ENCODE measurements at regions of chr5 and their contacts with region 1.

Region 1: DNA sequence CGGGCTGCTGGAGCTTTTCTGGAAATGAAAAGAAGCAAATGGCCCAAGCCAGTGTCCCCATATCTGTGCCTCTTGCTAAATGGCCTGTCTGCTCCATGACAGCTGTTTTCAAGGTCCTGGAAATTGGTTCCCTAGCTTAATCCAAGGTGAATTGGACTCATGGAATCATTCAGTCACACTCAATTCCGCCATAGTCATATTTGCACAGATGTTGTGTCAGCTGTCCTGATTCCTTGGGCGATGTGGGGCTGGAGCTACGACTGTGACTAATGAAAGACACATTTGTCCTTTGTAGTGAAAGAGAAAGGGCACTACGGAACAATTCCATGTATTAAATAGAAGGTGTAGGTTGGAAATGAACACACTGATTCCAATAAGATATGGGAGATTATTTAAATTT is 102.9 kb upstream of the MEGF10 start:
- DNase-seq: no peak
- ATAC-seq: no peak
- H3K4me3 ChIP-seq: no peak overlapping the region
- H3K27ac ChIP-seq: no peak overlapping the region
- H3K4me1 ChIP-seq: no peaks in the 10 kb centered on the region; the same call in 1 of the 2 replicates
- H3K27me3 ChIP-seq: no peaks in the 10 kb centered on the region; the same call in 1 of the 2 replicates
- CTCF ChIP-seq: no peak

Region 2: GRCh38 chr5:127299678-127300077 is 112.0 kb after region 1 on chr5:
- CTCF ChIA-PET with region 1: no interaction called
- POLR2A ChIA-PET with region 1: interaction called, 31 read pairs
- in situ Hi-C with region 1: no loop called
- intact Hi-C with region 1: no loop called
- DNase-seq: no peak
- ATAC-seq: no peak
- H3K4me3 ChIP-seq: no peak overlapping the region
- H3K27ac ChIP-seq: no peak overlapping the region
- H3K4me1 ChIP-seq: no peaks in the 10 kb centered on the region
- H3K27me3 ChIP-seq: peaks cover 9% of the 10 kb centered on the region
- CTCF ChIP-seq: no peak